ENCODE measurements at regions of chr3 and their contacts with region 1.

Region 1: GRCh38 chr3:107064445-107065060 is 312.7 kb upstream of the CCDC54 start:
- DNase-seq: no peak
- ATAC-seq: peak; percentile 92

Region 2: GRCh38 chr3:106609666-106610301 is 454.8 kb before region 1 on chr3:
- intact Hi-C with region 1: loop called (anchors 5 kb)
- DNase-seq: no peak
- ATAC-seq: peak; percentile 79

Region 3: GRCh38 chr3:106824856-106825255 is 239.7 kb before region 1 on chr3:
- intact Hi-C with region 1: loop called (anchors 2 kb)
- DNase-seq: no peak
- ATAC-seq: peak; percentile 66

Measured in Right ventricle myocardium inferior (tissue), 1 donor.